IMR-90 (cell line): ENCODE measurements at regions of chr12 and their contacts with region 1.

Region 1: DNA sequence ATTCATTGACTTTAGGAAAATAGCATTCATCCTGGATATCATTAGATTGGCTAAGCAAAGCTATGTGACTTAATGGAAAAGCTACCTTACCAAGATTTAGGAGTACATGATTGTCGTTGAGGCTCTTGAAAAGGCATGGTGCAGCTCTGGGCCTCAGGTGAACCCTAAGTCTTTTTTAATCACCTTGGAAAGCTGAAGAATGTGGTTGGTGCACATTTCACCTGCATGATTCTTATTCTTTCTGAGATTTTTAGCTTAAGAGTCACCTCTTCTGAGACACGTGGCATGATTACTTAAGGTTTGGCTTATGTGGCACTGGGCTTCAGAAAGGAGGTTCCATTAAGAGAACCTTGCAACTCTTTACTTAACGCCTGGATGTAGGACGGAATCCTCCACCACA is 498.4 kb downstream of the TMEM117 start:
- DNase-seq: no peak
- ATAC-seq: no peak
- H3K4me3 ChIP-seq: no peak overlapping the region
- H3K27ac ChIP-seq: no peak overlapping the region
- H3K4me1 ChIP-seq: no peaks in the 10 kb centered on the region
- H3K27me3 ChIP-seq: no peaks in the 10 kb centered on the region
- CTCF ChIP-seq: no peak
- POLR2A ChIP-seq: no peak
- RAD21 ChIP-seq: no peak

Region 2: GRCh38 chr12:43869184-43869583 is 465.1 kb before region 1 on chr12:
- CTCF ChIA-PET with region 1: no interaction called
- POLR2A ChIA-PET with region 1: no interaction called
- dilution Hi-C with region 1: no loop called
- in situ Hi-C with region 1: no loop called
- intact Hi-C with region 1: no loop called
- DNase-seq: no peak
- ATAC-seq: no peak
- H3K4me3 ChIP-seq: no peak overlapping the region
- H3K27ac ChIP-seq: no peak overlapping the region
- H3K4me1 ChIP-seq: no peaks in the 10 kb centered on the region
- H3K27me3 ChIP-seq: no peaks in the 10 kb centered on the region
- CTCF ChIP-seq: no peak
- POLR2A ChIP-seq: no peak
- RAD21 ChIP-seq: no peak

Region 3: DNA sequence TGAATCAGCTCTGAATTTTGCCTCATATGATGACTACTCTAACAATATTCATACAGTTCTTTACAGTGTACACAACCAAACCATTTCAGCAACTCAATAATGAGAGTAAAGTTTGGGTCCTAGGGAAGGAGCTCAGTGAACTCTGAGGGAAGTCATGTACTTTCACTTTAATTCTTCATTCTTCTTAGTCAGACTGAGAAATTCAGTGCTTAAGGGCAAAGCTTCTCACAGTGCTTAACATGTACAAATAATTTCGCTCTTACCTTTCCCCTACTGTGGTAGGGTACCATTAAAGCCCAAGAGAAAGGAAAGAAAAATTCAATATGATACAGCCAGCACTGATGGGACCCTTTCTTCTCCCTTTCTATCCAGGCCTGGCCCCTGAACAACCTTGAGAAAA is 106.8 kb after region 1 on chr12:
- CTCF ChIA-PET with region 1: interaction called, 10 read pairs
- POLR2A ChIA-PET with region 1: no interaction called
- dilution Hi-C with region 1: no loop called
- in situ Hi-C with region 1: no loop called
- intact Hi-C with region 1: no loop called
- DNase-seq: no peak
- ATAC-seq: no peak
- H3K4me3 ChIP-seq: no peak overlapping the region
- H3K27ac ChIP-seq: no peak overlapping the region
- H3K4me1 ChIP-seq: no peaks in the 10 kb centered on the region
- H3K27me3 ChIP-seq: no peaks in the 10 kb centered on the region
- CTCF ChIP-seq: no peak
- POLR2A ChIP-seq: no peak
- RAD21 ChIP-seq: no peak